ENCODE measurements at regions of chr7 and their contacts with region 1.

Region 1: GRCh38 chr7:127678947-127679346 is 27.0 kb downstream of the SND1 start:
- DNase-seq: peak; percentile 5
- H3K4me3 Mint-ChIP-seq: peak overlapping the region; percentile 36
- H3K27ac Mint-ChIP-seq: peak overlapping the region; percentile 77
- H3K4me1 Mint-ChIP-seq: peaks cover 66% of the 10 kb centered on the region
- H3K27me3 Mint-ChIP-seq: no peaks in the 10 kb centered on the region

Region 2: GRCh38 chr7:127689194-127689772 is 10.3 kb after region 1 on chr7:
- intact Hi-C with region 1: loop called (anchors 1 kb)
- DNase-seq: no peak
- H3K4me3 Mint-ChIP-seq: no peak overlapping the region
- H3K27ac Mint-ChIP-seq: no peak overlapping the region
- H3K4me1 Mint-ChIP-seq: peaks cover 46% of the 10 kb centered on the region
- H3K27me3 Mint-ChIP-seq: no peaks in the 10 kb centered on the region